ENCODE measurements at regions of chr12 and their contacts with region 1.

Region 1: DNA sequence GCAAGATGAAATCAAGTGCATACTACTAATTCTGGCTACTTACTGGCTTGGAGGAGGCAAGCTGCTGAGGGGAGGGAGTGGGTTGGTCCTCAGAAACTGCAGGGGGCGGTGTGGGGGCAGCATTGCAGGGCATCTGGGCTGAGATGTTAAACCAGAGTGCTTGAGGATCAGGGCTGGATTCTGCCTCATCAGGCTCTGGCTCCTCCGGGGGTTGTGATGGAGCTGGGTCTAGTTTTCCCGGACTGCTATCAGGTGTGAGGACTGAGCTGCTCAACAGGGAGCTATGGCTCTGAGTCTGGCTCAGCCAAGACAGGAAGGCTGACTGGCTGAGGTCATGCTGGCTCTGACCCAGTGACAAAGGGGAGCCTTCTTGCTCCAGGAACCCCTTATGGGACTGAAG is 28.6 kb downstream of the BAZ2A start:
- DNase-seq: no peak
- H3K4me3 Mint-ChIP-seq: no peak overlapping the region
- H3K27ac Mint-ChIP-seq: peak overlapping the region; percentile 23
- H3K4me1 Mint-ChIP-seq: no peaks in the 10 kb centered on the region
- H3K27me3 Mint-ChIP-seq: no peaks in the 10 kb centered on the region
- CTCF ChIP-seq: no peak

Region 2: DNA sequence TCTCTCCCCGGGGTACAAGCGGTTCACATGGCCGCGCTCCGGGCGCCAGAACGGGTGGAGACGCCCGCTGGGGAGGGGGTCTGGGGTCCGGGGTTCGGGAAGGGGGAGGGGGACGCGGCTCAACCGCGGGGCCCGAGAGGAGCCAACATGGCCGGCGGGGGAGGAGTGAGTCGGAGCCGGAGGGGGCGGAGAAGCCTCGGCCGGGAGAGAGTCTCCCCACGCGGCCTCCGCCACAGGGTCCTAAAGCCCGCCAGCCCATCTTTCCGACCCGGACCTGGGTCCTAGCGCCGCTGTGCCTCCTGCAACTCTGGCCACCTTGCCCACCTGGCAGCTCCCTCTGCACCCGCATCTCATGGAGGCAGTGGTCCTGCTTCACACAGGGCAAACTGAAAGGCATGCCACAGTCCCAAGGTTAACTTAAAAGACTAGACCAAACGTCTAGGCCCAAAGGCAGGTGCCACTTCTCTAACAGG is 28.7 kb after region 1 on chr12 and contains the start of gene BAZ2A:
- CTCF ChIA-PET with region 1: interaction called, 32 read pairs
- POLR2A ChIA-PET with region 1: interaction called, 11 read pairs
- intact Hi-C with region 1: no loop called
- DNase-seq: peak; percentile 83
- H3K4me3 Mint-ChIP-seq: peak within 1 kb of the TSS; percentile 71
- H3K27ac Mint-ChIP-seq: peak within 1 kb of the TSS; percentile 11
- H3K4me1 Mint-ChIP-seq: peaks cover 38% of the 10 kb centered on the region
- H3K27me3 Mint-ChIP-seq: no peaks in the 10 kb centered on the region
- CTCF ChIP-seq: no peak
- total RNA-seq, gene BAZ2A: 87.3 and 101 TPM in 2 replicates

Measured in MCF 10A (cell line).